Motor neuron (in vitro differentiated cells): ENCODE measurements at regions of chr2 and their contacts with region 1.

Region 1: GRCh38 chr2:44087036-44087713 is 81.5 kb upstream of the PPM1B start:
- ATAC-seq: peak; percentile 94 to 99 (median 96)
- H3K4me3 ChIP-seq: peak overlapping the region; percentile 19 to 27 (median 24)
- H3K27ac ChIP-seq: no peak overlapping the region
- H3K4me1 ChIP-seq: peaks cover 2 to 9% of the 10 kb centered on the region in 2 donors

Region 2: GRCh38 chr2:43887176-43887575 is 200.0 kb before region 1 on chr2:
- in situ Hi-C with region 1: no loop called
- ATAC-seq: no peak
- H3K4me3 ChIP-seq: no peak overlapping the region
- H3K27ac ChIP-seq: no peak overlapping the region
- H3K4me1 ChIP-seq: peaks cover 12 to 17% of the 10 kb centered on the region in 2 donors

Region 3: GRCh38 chr2:44291281-44292248 is 204.4 kb after region 1 on chr2:
- in situ Hi-C with region 1: loop called in 1 of 9 experiments (anchors 25 kb)
- ATAC-seq: peak; percentile 71 to 99 (median 90)
- H3K4me3 ChIP-seq: no peak overlapping the region
- H3K27ac ChIP-seq: no peak overlapping the region
- H3K4me1 ChIP-seq: peaks cover 7 to 14% of the 10 kb centered on the region in 2 donors